Activated CD4-positive, alpha-beta T cell treated with anti-CD3 and anti-CD28 coated beads for 36 hours (primary cell): ENCODE measurements at regions of chr1 and their contacts with region 1.

Region 1: DNA sequence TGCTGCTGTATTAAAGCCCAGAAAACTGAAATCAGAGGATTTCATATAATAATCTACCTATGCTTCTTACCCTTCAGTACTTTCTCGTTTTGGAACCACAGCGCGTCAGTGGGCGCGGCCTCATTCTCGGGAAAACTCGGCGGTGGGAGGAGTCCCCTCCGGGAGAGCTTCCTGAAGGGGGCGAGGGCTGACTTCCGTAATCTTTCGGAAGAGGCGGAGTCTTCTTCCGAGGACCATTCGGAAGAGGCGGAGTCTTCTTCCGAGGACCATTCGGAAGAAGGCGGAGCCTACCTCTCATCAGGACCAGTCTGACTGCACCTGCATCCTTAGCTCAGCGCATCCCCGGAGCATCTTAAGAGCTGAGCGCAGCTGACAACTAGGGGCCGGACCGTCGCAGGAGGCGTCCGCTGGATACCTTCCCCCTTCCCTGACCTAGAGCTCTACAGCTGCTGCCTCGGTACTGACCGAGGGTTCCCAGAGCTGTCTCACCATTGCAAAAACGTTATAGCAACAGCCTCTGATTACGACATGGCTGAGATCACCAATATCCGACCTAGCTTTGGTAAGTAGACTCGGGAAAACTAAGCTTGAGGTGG is at the start of gene SYT11:
- DNase-seq: peak; percentile 97
- ATAC-seq: peak; percentile 89
- H3K4me3 Mint-ChIP-seq: peak within 1 kb of the TSS; percentile 78
- H3K27ac Mint-ChIP-seq: peak within 1 kb of the TSS; percentile 83
- H3K4me1 Mint-ChIP-seq: peaks cover 44% of the 10 kb centered on the region
- H3K27me3 Mint-ChIP-seq: peaks cover 3% of the 10 kb centered on the region
- total RNA-seq, gene SYT11: 14.3 to 14.8 TPM

Region 2: DNA sequence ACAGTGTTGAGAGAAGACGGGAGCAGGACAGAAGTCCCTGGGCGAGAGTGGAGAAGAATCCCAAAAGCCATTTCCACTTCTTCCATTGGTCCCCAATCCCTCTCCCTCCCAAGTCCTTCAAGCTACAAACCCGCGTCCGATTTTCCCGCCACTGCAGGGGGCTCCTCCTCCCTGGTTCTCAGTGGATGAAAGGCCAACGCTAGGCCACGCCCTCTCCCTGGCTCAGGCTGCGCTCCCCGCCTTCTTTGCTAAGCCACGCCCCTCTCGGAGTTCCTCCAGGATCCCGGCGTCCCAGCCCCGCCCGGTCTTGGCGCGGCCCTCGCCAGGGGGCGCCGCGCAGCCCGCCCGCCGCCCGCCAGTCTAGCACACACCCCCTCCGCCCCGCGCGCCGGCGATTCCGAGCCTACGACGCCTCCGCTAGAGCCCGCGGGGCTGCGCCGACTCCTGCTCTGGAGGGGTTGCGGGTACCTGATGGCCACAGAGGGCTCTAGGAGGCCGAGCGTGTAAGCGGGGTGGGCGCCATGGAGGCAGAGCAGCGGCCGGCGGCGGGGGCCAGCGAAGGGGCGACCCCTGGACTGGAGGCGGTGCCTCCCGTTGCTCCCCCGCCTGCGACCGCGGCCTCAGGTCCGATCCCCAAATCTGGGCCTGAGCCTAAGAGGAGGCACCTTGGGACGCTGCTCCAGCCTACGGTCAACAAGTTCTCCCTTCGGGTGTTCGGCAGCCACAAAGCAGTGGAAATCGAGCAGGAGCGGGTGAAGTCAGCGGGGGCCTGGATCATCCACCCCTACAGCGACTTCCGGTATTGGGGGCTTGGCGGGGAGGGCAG is 582.0 kb before region 1 on chr1 and contains the start of gene HCN3:
- CTCF ChIA-PET with region 1: no interaction called
- POLR2A ChIA-PET with region 1: no interaction called
- intact Hi-C with region 1: loop called in 1 of 2 experiments (anchors 1 kb)
- DNase-seq: peak; percentile 97
- ATAC-seq: peak; percentile 68
- H3K4me3 Mint-ChIP-seq: peak within 1 kb of the TSS; percentile 63
- H3K27ac Mint-ChIP-seq: no peak within 1 kb of the TSS
- H3K4me1 Mint-ChIP-seq: peaks cover 31% of the 10 kb centered on the region
- H3K27me3 Mint-ChIP-seq: no peaks in the 10 kb centered on the region
- total RNA-seq, gene HCN3: 1.9 to 2.3 TPM

Region 3: GRCh38 chr1:155688324-155689080 is 170.8 kb before region 1 on chr1 and contains the start of gene YY1AP1:
- CTCF ChIA-PET with region 1: no interaction called
- POLR2A ChIA-PET with region 1: no interaction called
- intact Hi-C with region 1: loop called in 1 of 2 experiments (anchors 5 kb)
- DNase-seq: peak; percentile 95
- ATAC-seq: peak; percentile 86
- H3K4me3 Mint-ChIP-seq: peak within 1 kb of the TSS; percentile 97
- H3K27ac Mint-ChIP-seq: peak within 1 kb of the TSS; percentile 94
- H3K4me1 Mint-ChIP-seq: peaks cover 29% of the 10 kb centered on the region
- H3K27me3 Mint-ChIP-seq: no peaks in the 10 kb centered on the region
- total RNA-seq, gene YY1AP1: 59.6 to 76.0 TPM

Region 4: GRCh38 chr1:155911156-155912055 is 52.1 kb after region 1 on chr1 and contains the start of gene RIT1:
- CTCF ChIA-PET with region 1: interaction called, 3 read pairs
- POLR2A ChIA-PET with region 1: interaction called, 3 read pairs
- intact Hi-C with region 1: loop called (anchors 1 kb)
- DNase-seq: peak; percentile 93
- ATAC-seq: peak; percentile 85
- H3K4me3 Mint-ChIP-seq: peak within 1 kb of the TSS; percentile 85
- H3K27ac Mint-ChIP-seq: peak within 1 kb of the TSS; percentile 92
- H3K4me1 Mint-ChIP-seq: peaks cover 19% of the 10 kb centered on the region
- H3K27me3 Mint-ChIP-seq: no peaks in the 10 kb centered on the region
- total RNA-seq, gene RIT1: 20.3 to 23.0 TPM

Region 5: DNA sequence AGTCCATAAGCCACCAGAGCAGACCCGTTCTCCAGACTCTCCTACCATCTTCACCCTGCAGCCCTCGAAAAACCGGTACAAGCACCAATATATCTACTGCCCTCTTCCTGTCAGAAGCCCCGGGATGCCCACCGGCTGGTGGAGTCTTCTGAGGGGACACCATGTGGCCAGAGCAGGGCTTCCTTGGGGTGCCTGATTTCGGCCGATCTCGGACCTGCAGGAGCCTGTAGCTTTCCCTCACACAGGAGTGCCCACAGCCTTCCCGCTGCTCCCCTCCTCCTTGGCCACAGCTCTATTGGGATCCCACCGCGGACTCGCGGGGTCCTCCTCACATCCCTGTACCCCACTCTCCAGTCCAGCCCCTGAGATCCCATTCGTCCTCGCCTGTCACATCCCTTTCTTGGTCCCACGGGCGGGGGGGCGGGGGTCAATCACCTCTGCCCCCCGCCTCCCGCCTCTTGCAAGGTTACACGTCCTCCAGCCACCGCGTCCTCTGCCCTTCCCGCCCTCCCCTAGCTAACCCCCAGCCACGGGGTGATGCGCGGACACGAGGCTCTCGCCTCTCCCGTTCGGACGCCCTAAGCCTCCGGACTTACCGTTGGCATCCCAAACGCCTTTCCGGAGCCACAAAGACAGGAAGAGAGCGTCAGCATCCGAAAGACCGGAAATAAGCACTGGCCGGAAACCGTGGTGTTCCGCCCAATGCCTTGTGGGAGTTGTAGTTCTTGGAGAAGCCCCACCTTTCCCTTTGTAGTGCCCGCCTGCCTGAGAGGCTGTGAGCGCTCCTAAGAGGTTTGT is 161.2 kb after region 1 on chr1 and contains the start of gene SSR2:
- CTCF ChIA-PET with region 1: no interaction called
- POLR2A ChIA-PET with region 1: no interaction called
- intact Hi-C with region 1: loop called in 1 of 2 experiments (anchors 1 kb)
- DNase-seq: peak; percentile 92
- ATAC-seq: peak; percentile 100
- H3K4me3 Mint-ChIP-seq: peak within 1 kb of the TSS; percentile 94
- H3K27ac Mint-ChIP-seq: peak within 1 kb of the TSS; percentile 96
- H3K4me1 Mint-ChIP-seq: peaks cover 20% of the 10 kb centered on the region
- H3K27me3 Mint-ChIP-seq: peaks cover 4% of the 10 kb centered on the region
- total RNA-seq, gene SSR2: 143 to 197 TPM

Region 6: GRCh38 chr1:156282479-156283222 is 423.3 kb after region 1 on chr1 and contains the start of gene SMG5:
- CTCF ChIA-PET with region 1: no interaction called
- POLR2A ChIA-PET with region 1: no interaction called
- intact Hi-C with region 1: loop called in 1 of 2 experiments (anchors 1 kb)
- DNase-seq: peak; percentile 98
- ATAC-seq: peak; percentile 92
- H3K4me3 Mint-ChIP-seq: peak within 1 kb of the TSS; percentile 96
- H3K27ac Mint-ChIP-seq: peak within 1 kb of the TSS; percentile 92
- H3K4me1 Mint-ChIP-seq: peaks cover 29% of the 10 kb centered on the region
- H3K27me3 Mint-ChIP-seq: no peaks in the 10 kb centered on the region
- total RNA-seq, gene SMG5: 61.7 to 64.6 TPM

Region 7: GRCh38 chr1:156310962-156311361 is 451.6 kb after region 1 on chr1:
- CTCF ChIA-PET with region 1: no interaction called
- POLR2A ChIA-PET with region 1: no interaction called
- intact Hi-C with region 1: no loop called
- DNase-seq: no peak
- ATAC-seq: no peak
- H3K4me3 Mint-ChIP-seq: no peak overlapping the region
- H3K27ac Mint-ChIP-seq: no peak overlapping the region
- H3K4me1 Mint-ChIP-seq: no peaks in the 10 kb centered on the region
- H3K27me3 Mint-ChIP-seq: no peaks in the 10 kb centered on the region